AG04449 (cell line): ENCODE measurements at regions of chr1 and their contacts with region 1.

Region 1: GRCh38 chr1:84772428-84772943 is 82.2 kb upstream of the SSX2IP start:
- DNase-seq: no peak
- H3K4me3 ChIP-seq: no peak overlapping the region
- CTCF ChIP-seq: peak; percentile 79

Region 2: DNA sequence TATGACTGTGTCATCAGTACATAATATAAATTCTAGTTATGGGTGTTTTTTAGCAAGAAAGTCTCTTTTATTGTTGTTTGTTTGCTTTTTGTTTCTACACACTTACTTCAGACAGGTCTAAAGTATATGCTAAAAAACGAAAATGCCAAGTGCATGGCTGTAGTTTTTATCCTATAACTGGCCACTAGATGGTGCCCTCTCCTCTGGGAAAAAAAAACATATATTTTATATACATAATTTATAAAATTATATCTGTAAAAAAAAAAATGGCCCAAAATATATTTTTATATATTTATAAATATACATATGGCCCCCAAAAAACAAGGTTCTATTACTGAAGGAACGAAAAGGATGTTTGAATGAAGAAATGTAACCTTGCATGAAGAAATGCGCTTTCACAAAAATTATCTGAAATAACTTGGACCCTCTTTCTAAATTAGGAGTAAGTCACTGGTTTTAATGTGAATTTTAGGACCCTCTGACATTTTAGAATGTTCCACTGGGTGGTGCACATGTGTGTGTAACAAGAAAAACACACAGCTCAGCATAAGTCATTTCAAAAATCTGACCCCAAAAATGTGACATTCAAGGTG is 867.1 kb before region 1 on chr1:
- CTCF ChIA-PET with region 1: interaction called, 15 read pairs
- POLR2A ChIA-PET with region 1: no interaction called
- DNase-seq: no peak
- H3K4me3 ChIP-seq: no peak overlapping the region
- CTCF ChIP-seq: peak; percentile 42

Region 3: DNA sequence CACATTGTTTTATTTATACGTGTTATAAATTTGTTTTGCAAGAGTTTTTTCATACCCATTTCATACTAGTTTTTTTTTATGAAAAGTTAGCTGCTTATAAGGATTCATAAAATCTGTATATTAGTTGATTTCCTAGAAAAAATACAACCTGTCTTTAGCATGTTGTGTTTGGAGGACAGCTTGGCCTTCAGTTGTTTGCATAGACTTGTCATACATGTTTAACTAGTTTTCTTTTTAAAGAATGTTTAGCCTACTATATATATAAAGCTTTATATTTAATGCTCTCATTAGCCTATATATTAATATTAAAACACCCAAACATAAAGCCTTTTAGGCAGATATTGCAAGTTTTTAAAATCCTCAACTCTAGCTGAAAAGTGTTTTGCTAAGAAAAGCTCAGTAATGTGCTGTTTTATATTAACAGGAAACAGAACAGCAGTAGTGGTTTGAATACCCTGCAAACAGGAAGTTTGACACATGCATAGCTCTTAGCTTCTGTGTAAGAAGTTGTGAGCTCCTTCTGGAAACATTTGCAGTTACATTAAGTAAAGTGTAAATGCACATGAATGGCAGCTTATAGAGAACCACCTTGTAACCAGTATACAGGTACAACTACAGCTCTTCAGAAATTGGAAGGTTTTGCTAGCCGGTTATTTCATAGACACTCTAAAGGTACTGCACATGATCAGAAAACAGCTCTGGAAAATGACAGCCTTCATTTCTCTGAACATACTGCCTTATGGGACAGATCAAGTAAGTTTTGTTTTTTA is 628.5 kb before region 1 on chr1 and contains the start of gene PRKACB:
- CTCF ChIA-PET with region 1: interaction called, 32 read pairs
- POLR2A ChIA-PET with region 1: no interaction called
- DNase-seq: no peak
- H3K4me3 ChIP-seq: no peak within 1 kb of the TSS
- CTCF ChIP-seq: no peak

Region 4: DNA sequence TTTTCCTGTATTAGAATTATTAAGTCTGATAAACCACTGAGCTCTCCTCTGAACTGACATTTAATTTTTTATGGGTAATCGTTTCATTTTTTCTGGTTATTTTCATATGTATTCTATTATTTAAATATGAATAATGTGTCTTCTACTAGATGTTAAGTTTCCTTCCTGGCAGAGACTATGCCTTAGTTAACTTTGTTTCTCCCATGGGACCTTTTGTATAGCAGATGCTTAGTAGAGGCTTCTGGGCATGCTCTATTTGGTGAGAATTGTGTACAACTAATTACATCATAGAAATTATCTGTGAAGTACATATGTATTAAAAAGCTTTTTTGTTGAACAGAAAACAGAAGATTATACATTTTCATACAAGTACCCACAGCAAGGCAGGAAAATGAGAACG is 221.7 kb before region 1 on chr1:
- CTCF ChIA-PET with region 1: no interaction called
- POLR2A ChIA-PET with region 1: no interaction called
- DNase-seq: no peak
- H3K4me3 ChIP-seq: no peak overlapping the region
- CTCF ChIP-seq: no peak

Region 5: GRCh38 chr1:84603941-84604830 is 168.3 kb before region 1 on chr1:
- CTCF ChIA-PET with region 1: interaction called, 17 read pairs
- POLR2A ChIA-PET with region 1: no interaction called
- DNase-seq: peak; percentile 63
- H3K4me3 ChIP-seq: peak overlapping the region; percentile 43
- CTCF ChIP-seq: peak; percentile 58

Region 6: DNA sequence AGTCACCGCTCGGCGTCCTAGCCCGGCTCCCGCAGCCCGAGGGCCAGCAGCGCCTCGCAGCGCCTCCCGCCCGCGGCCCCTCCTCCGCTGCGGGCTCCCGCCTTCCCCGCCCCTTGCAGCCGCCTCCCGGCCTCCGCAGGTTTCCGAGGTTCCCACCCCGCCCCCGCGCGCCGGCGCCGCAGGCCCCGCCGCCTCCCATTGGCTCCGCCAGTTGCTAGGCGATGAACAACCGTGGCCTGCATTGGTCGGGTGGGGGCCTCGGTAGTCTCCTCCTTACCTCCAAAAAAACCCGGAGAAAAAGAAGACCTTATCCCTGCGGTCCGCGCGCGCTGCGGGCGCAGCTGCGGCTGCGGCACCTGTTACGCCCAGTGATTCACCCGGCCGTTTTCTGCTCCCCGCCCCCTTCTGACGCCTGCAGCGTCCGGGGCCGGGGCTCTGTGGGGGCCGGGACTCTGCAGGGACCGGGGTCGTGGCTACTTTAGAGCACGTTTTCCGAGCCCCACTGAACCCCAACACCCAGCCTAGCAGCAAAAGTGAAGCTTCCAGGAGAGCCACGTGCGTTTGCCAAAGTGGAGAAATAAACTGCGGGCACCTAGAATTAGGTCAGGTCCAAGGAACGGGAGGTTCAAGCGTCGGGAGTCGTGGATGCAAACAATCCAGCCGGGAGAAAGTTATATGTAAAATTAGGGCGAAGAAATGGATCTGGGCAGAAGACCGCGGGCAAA is 81.9 kb before region 1 on chr1 and contains the start of gene SSX2IP:
- CTCF ChIA-PET with region 1: no interaction called
- POLR2A ChIA-PET with region 1: no interaction called
- DNase-seq: peak; percentile 69
- H3K4me3 ChIP-seq: peak within 1 kb of the TSS; percentile 77
- CTCF ChIP-seq: no peak

Region 7: DNA sequence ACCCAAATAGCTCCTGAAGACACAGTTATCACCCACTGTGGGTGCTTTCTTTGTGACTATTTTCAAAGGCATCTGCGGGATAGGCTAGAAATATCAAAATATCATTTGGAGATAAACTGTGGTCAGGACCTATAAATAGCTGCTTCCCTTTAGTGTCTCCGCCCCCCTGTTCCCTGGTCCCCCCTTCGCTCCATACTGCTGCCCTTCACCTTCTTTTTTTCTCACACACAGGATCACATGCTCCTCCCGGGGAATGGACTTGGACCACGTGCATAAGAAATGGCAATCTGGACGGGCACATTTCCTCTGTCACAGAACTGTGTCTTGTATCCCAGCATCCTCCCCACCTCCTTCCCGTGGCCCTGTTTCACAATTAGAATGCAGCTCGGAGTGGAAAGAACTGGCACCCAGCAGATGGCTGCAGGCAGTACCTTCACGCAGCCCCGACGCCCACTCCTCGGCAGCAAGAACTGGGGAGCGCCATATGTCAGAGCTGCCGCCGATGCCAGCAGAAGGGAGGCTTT is 13.5 kb before region 1 on chr1:
- CTCF ChIA-PET with region 1: interaction called, 123 read pairs
- POLR2A ChIA-PET with region 1: no interaction called
- DNase-seq: no peak
- H3K4me3 ChIP-seq: no peak overlapping the region; the same call in 1 of the 2 replicates
- CTCF ChIP-seq: no peak

Region 8: DNA sequence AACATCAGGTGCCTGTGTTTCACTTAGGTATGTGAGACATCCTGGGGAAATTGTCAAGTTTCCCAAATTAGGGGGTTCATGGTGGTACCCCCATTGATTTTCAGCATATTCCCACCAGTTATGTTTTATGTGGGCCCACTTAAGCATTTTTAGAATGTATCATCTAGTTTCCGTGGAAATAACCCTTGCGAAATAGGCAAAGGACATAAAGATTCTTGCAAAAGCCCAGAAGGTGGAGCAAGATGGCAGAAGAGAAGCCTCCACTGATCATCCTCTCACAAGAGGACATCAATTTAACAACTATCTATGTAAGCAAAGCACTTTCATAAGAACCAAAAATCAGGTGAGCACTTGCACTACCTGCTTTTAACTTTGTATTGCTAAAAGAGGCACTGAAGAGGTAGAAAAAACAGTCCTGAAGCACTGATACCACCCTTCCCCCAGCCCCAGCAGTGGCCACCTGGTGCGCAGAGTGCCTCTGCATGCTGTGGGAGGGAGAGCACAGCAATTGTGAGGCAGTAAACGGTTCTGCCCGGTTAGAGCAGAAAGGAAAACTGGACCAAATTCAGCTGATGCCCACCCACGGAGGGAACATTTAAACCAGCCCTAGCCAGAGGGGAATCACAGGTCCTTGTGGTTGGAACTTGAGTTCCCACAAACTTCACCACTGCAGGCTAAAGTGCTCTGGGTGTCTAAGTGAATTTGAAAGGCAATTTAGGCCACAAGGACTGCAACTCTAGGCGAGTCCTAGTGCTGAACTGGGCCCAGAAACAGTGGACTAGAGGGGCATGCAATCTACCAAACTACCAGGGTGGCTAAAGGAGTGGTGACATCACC is 201.2 kb after region 1 on chr1:
- CTCF ChIA-PET with region 1: no interaction called
- POLR2A ChIA-PET with region 1: no interaction called
- DNase-seq: no peak
- H3K4me3 ChIP-seq: no peak overlapping the region
- CTCF ChIP-seq: no peak